BJ (cell line): ENCODE measurements at regions of chr16 and their contacts with region 1.

Region 1: GRCh38 chr16:19067349-19068236 is at the start of gene COQ7:
- DNase-seq: peak; percentile 97
- H3K4me3 ChIP-seq: peak within 1 kb of the TSS; percentile 72
- H3K27me3 ChIP-seq: no peaks in the 10 kb centered on the region
- CTCF ChIP-seq: no peak
- polyA plus RNA-seq, gene COQ7: 10.7 and 13.1 TPM in 2 replicates

Region 2: DNA sequence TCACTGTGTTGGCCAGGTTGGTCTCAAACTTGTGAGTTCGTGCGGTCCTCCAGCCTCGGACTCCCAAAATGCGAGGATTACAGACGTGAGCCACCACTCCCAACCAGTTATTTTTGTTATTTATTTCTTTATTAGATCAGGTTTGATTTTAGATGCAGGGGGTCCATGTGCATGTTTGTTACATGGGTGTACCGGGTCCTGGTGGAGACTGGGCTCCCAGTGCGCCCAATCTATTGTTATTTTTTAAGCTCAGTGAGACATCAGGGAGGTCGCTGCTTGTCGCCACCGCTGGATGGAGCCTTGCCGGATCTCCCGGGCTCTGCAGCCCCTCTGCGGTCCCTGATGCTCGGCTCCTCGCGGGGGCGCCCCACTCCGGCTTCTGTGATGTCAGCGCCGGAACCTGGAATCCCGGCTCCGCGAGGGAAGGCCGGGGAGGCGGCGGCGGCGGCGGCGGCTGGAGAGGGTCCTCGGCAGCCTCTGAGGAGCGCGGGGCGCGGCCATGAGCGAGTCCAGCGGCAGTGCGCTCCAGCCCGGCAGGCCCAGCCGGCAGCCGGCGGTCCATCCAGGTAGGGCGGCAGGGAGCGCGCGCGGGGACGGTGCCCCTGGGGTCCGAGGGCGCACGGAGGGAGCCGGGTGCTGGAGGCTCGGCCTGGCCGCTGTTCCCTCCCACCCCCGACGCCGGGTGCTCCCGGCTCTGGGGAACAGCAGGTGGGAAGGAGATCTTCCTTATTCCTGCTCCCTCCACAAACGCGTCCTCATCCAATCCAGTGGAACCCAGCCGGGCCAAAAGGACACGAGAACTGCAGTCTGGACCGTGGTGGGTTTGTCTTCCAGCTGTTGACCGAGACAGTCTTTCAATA is 83.8 kb before region 1 on chr16 and contains the start of gene TMC7:
- CTCF ChIA-PET with region 1: interaction called, 36 read pairs
- POLR2A ChIA-PET with region 1: no interaction called
- DNase-seq: no peak
- H3K4me3 ChIP-seq: peak within 1 kb of the TSS; percentile 52
- H3K27me3 ChIP-seq: no peaks in the 10 kb centered on the region
- CTCF ChIP-seq: peak; percentile 94
- polyA plus RNA-seq, gene TMC7: 0.40 and 0.47 TPM in 2 replicates